Gastrocnemius medialis (tissue), 4 donors: ENCODE measurements at regions of chr6 and their contacts with region 1.

Region 1: GRCh38 chr6:121506761-121507754 is 71.6 kb downstream of the GJA1 start:
- DNase-seq: peak; percentile 7 to 69
- ATAC-seq: peak; percentile 96 to 98
- H3K4me3 ChIP-seq: no peak overlapping the region
- H3K27ac ChIP-seq: peak overlapping the region; percentile 55 to 66 (median 62)
- H3K4me1 ChIP-seq: peaks cover 0 to 3% of the 10 kb centered on the region in 2 donors
- H3K27me3 ChIP-seq: no peaks in the 10 kb centered on the region
- CTCF ChIP-seq: no peak
- POLR2A ChIP-seq: no peak

Region 2: DNA sequence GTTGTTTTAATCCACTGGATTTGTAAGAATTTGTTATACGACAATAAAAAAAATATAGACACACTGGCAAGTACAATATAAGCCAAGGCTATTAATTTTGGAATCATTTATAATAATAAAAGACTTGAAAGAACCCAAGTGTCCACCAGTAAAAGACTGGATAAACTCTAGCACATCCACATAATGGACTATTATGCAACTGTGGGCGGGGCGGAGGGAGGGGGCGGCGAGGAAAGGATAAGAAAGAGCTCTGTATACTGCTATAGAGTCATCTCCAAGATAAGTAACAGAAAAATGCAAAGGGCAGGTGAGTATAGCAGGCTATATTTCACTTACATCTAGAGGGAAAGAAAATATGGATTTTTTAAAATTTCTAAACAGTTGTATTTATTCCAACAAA is 296.1 kb before region 1 on chr6:
- in situ Hi-C with region 1: no loop called
- intact Hi-C with region 1: no loop called
- DNase-seq: no peak
- ATAC-seq: no peak
- H3K4me3 ChIP-seq: no peak overlapping the region
- H3K27ac ChIP-seq: no peak overlapping the region
- H3K4me1 ChIP-seq: no peaks in the 10 kb centered on the region
- H3K27me3 ChIP-seq: no peaks in the 10 kb centered on the region
- CTCF ChIP-seq: no peak
- POLR2A ChIP-seq: no peak

Region 3: DNA sequence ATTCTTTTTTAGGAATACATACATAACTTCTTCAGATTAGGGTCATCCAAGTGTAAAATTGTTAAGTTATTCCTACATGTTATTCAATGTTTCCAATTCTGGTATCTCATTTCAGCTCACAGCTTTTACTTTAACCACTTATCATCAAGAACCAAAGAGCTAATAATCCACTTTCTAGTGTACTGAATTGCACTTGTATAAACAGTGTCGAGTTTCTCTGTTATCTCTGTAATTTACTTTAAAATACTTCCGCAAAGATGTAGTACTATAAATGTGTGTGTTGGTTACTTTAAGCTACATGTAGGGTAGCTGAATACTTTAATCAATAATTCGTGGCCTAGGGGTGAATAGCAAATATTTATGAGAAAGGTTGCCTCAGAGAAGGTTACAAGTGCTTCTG is 80.4 kb before region 1 on chr6:
- in situ Hi-C with region 1: no loop called
- intact Hi-C with region 1: no loop called
- DNase-seq: no peak
- ATAC-seq: no peak
- H3K4me3 ChIP-seq: no peak overlapping the region
- H3K27ac ChIP-seq: no peak overlapping the region
- H3K4me1 ChIP-seq: no peaks in the 10 kb centered on the region
- H3K27me3 ChIP-seq: no peaks in the 10 kb centered on the region
- CTCF ChIP-seq: no peak
- POLR2A ChIP-seq: no peak

Region 4: DNA sequence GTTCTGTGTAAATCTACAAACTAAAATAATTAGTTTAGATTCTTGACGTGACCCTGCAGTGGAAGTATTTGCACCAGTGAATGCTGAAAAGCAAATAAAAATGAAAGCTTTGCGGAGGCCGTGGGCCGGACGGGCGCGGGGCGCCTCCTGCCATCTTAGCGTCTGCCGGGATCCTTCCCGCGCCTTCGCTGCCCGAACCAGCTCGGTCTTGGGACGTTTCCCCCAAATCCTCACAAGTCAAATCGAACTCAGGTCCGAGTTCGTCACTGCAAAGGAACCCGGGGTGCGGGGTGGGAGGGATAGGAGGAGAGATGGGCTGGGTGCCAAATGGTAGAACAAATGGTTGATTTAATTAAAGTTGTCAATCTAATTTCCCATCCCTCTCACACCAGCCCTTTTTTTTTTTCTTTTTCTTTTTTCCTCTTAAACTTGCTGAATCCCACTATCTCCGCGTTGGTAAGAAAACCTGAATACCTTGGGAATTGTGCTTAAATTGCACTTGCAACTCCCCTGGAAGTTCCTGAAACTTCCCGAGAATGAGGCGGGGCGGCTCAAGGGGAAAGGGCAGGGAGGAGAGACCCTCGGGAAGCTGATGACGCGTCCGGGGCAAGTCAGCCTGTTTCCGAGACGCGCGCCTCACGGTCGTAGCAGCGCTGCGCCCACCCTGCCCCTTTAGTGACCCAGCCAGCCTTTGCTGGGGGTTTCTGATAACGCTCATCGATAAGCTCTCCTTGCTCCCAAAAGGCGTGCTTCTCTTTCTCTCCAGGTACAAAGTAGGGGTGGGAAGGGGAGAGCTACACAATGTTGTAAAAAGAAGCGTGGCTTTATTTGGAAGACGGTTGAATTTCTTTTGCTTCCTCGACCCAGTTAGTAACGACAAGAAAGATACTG is 69.9 kb before region 1 on chr6:
- in situ Hi-C with region 1: no loop called
- intact Hi-C with region 1: loop called (anchors 5 kb)
- DNase-seq: peak in 1 of 2 donors; percentile 19
- ATAC-seq: peak; percentile 47 to 49
- H3K4me3 ChIP-seq: peak overlapping the region; percentile 58 to 74 (median 64)
- H3K27ac ChIP-seq: peak overlapping the region; percentile 42 to 79 (median 77)
- H3K4me1 ChIP-seq: peaks cover 7 to 13% of the 10 kb centered on the region in 2 donors
- H3K27me3 ChIP-seq: peaks cover 18 to 36% (median 30%) of the 10 kb centered on the region in 3 donors
- CTCF ChIP-seq: no peak
- POLR2A ChIP-seq: peak in 1 of 2 donors; percentile 25

Region 5: DNA sequence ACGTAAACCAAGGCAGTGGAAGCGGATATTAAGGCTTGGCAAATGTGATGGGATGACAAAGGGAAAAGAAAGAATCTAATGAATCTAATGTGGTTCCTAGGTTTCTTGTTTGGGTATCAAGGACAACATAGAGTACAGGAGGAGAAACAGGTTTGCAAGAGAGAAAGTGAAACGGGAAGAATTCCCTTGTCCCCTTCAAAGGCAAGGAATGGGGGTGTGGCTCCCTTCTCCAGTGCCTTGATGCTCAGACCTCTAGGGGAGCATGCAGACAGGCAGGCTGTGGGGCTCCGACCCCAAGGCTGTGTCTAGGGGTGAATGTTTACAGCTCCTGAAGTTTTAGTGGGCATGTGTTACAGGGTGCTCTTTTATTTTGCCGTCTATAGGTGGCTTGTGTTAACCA is 574.9 kb after region 1 on chr6:
- in situ Hi-C with region 1: no loop called
- intact Hi-C with region 1: no loop called
- DNase-seq: no peak
- ATAC-seq: no peak
- H3K4me3 ChIP-seq: no peak overlapping the region
- H3K27ac ChIP-seq: no peak overlapping the region
- H3K4me1 ChIP-seq: no peaks in the 10 kb centered on the region
- H3K27me3 ChIP-seq: no peaks in the 10 kb centered on the region
- CTCF ChIP-seq: no peak
- POLR2A ChIP-seq: no peak